Posterior vena cava (tissue), 2 donors: ENCODE measurements at regions of chr10 and their contacts with region 1.

Region 1: DNA sequence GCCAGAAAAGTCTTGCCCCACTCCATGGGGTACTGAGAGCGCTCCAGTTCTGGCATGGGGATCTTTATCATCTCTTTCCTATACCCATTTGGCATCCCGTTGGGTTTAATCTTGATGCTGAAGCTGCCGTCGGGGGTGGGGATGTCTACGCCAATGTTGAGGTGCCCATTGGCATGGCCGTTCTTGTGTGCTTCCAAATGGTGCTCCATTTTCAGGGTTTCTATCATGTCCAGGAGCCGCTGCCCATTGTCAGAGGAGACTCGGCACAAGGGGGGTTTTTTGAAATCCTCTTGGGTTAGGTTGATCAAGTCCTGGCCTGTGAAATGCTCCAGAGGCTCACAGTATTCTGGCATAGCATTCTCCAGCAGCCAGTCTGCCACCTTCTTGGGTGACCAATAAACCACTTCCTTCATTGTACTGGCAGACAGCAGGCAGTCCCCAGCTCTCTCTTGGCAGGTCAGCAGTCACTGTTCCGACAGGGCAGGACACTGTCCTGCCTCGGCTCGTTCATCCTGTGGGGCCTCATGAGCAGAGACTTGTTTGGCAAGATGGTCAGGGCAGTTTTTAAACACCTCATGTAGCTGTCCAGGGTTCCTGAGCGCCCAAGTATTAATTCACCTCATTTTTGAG is 92.5 kb upstream of the ASAH2 start:
- DNase-seq: peak; percentile 66

Region 2: DNA sequence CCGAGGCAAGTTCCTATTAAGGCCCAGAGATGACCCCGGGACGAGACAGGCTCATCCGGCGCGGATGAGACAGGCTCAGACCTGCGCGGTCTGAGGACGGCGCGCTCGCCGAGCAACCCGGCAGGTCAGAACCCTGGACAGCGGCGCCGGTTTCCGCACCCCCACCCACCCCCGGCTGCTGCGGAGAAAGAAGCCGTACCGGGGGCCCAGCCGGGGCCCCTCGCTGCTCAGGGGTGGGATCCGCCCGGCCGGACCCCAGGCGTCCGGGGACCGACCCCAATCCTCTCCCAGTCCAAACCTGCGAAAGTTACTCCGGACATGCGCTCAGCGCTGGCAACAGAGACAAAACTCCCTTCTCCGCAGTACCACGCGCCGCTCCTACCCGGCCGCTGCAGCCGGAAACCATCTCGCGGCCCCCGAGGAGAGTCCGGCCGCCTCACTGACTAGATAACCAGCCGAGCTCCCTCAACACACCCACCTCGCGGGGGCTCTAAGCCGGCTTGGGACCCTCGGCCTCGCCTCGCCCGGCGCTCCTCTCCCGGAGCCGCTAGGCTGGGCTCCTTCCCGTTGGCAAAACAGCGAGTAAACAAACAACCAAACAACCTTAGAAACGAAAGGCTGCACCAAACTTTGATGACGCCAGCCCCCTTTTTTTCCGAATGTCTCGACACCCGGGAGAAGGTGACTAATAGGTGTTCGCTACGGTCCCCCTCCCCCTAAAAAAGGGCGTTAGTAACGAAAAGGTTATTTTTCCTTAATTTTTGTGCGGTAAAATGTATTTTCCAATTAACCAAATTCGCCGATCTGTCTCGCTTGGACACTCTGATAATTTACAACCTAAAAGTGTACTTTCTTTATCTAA is 945.6 kb before region 1 on chr10:
- intact Hi-C with region 1: no loop called
- DNase-seq: peak; percentile 87

Region 3: GRCh38 chr10:50260791-50261281 is 83.0 kb before region 1 on chr10:
- intact Hi-C with region 1: loop called in 1 of 2 experiments (anchors 2 kb)
- DNase-seq: no peak